Activated CD4-positive, alpha-beta T cell treated with anti-CD3 and anti-CD28 coated beads, Interleukin-2, amount 10 ng/mL, durations not matched to agents 24 days and 14 days (primary cell): ENCODE measurements at regions of chr10 and their contacts with region 1.

Region 1: DNA sequence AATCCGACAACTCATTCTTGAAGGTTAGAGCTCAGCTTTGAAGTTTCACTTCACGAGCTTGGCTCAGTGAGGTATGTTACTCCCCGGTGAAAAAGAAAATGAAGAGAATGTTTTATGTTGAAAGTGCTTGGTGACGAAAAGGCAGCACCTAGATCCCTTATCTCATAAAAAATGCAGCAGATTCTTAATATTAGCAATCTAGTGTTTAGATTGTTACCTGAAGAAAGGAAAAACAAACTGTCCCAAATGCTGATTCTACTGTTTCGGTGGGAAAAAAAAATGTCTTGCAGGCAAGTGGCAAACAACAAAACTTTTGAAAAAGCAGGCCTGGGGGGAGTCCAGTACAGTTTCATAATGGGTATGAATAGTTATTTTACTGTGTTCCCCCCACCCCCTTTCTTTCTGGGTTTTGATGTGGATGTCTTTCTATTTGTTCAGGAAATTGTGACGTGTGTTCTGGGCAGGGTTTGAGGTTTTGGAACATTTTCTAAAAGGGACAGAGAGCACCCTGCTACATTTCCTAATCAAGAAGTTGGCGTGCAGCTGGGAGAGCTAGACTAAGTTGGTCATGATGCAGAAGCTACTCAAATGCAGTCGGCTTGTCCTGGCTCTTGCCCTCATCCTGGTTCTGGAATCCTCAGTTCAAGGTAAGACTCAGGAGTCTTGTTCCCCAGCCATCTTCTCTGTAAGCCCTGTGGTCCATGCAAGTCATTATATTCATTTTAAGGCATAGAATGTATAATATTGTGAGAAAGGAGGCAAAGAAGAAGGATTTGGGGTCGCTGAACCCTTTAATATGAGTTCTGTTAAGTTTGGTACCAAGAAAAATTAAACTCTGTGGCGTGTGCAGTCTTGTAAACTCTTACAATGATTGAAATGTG is at the start of gene SRGN:
- DNase-seq: peak; percentile 95
- H3K4me3 Mint-ChIP-seq: peak within 1 kb of the TSS; percentile 88
- H3K27ac Mint-ChIP-seq: peak within 1 kb of the TSS; percentile 93
- H3K4me1 Mint-ChIP-seq: peaks cover 50% of the 10 kb centered on the region
- H3K27me3 Mint-ChIP-seq: no peaks in the 10 kb centered on the region
- total RNA-seq, gene SRGN: 996 and 999 TPM in 2 replicates

Region 2: GRCh38 chr10:68720793-68721672 is 366.8 kb before region 1 on chr10 and contains the start of gene CCAR1:
- intact Hi-C with region 1: loop called (anchors 5 kb)
- DNase-seq: peak; percentile 98
- H3K4me3 Mint-ChIP-seq: peak within 1 kb of the TSS; percentile 95
- H3K27ac Mint-ChIP-seq: peak within 1 kb of the TSS; percentile 98
- H3K4me1 Mint-ChIP-seq: peaks cover 14% of the 10 kb centered on the region
- H3K27me3 Mint-ChIP-seq: no peaks in the 10 kb centered on the region
- total RNA-seq, gene CCAR1: 95.2 and 112 TPM in 2 replicates

Region 3: GRCh38 chr10:68997211-68997610 is 90.6 kb before region 1 on chr10:
- intact Hi-C with region 1: loop called (anchors 2 kb)
- DNase-seq: no peak
- H3K4me3 Mint-ChIP-seq: peak overlapping the region; percentile 59
- H3K27ac Mint-ChIP-seq: peak overlapping the region; percentile 93
- H3K4me1 Mint-ChIP-seq: peaks cover 25% of the 10 kb centered on the region
- H3K27me3 Mint-ChIP-seq: no peaks in the 10 kb centered on the region

Region 4: DNA sequence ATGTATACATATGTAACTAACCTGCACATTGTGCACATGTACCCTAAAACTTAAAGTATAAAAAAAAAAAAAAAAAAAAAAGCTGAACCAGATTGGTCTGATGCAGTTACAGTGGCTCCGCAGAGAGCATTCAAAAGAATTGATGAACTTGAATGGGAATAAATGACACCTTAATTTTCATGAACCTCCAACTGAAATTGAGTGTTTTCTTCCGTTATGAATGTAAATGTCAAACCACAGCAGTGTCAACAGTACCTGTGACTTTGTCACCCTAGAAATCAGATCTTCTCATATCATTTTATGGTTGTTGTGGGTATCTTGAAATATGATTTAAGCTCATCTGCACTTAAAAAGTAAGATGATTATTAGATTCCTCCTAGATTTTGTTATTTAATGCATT is 32.6 kb before region 1 on chr10:
- intact Hi-C with region 1: loop called (anchors 1 kb)
- DNase-seq: no peak
- H3K4me3 Mint-ChIP-seq: no peak overlapping the region
- H3K27ac Mint-ChIP-seq: peak overlapping the region; percentile 67
- H3K4me1 Mint-ChIP-seq: peaks cover 57% of the 10 kb centered on the region
- H3K27me3 Mint-ChIP-seq: no peaks in the 10 kb centered on the region

Region 5: DNA sequence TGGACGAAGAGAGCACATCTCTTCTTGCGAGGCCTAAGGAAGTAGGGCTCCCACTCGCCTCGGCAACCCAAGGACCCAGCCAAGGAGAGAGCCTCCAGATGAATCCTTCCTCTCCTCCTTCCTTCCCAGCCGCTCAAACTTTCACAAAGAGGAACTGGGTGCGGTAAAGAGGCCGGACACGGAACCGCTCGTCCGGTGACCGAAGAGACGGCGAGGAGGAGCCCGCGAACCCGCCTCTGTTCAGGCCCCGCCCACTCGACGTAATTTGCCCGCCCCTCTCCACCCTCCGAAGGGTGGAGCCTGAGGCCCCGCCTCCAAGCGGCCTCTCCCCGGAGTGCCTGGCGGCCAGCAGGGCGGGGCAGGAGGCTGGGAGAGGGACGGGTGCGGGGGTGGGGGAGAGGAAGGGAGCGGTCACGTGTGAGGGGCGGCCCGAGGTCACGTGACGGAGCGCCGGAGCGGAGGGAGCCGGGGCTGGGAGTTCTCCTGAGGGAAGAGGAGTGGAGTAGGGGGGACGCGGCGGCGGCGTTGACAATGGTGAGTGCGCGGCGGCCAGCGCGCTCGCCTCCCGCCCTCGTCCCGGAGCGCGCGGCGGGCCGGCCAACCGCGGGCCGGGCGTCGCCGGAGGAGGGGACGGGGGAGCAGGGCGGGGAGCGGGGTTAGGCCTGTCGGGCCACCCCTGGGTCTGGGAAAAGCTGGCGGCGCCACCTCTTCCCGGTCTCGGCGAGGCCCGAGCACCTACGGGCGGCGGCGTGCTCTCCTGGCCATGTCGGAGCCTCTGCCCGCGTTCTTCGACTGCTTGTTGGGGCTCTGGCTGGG is 36.1 kb after region 1 on chr10 and contains the start of gene VPS26A:
- intact Hi-C with region 1: loop called (anchors 1 kb)
- DNase-seq: peak; percentile 100
- H3K4me3 Mint-ChIP-seq: peak within 1 kb of the TSS; percentile 96
- H3K27ac Mint-ChIP-seq: peak within 1 kb of the TSS; percentile 94
- H3K4me1 Mint-ChIP-seq: peaks cover 22% of the 10 kb centered on the region
- H3K27me3 Mint-ChIP-seq: peaks cover 3% of the 10 kb centered on the region
- total RNA-seq, gene VPS26A: 29.2 and 30.8 TPM in 2 replicates

Region 6: GRCh38 chr10:69141304-69141703 is 53.5 kb after region 1 on chr10:
- intact Hi-C with region 1: no loop called
- DNase-seq: no peak
- H3K4me3 Mint-ChIP-seq: no peak overlapping the region
- H3K27ac Mint-ChIP-seq: no peak overlapping the region
- H3K4me1 Mint-ChIP-seq: peaks cover 7% of the 10 kb centered on the region
- H3K27me3 Mint-ChIP-seq: no peaks in the 10 kb centered on the region